ENCODE measurements at regions of chr1 and their contacts with region 1.

Region 1: GRCh38 chr1:78132174-78132947 is 86.6 kb downstream of the GIPC2 start:
- DNase-seq: no peak
- H3K4me3 Mint-ChIP-seq: no peak overlapping the region
- H3K27ac Mint-ChIP-seq: no peak overlapping the region
- H3K4me1 Mint-ChIP-seq: no peaks in the 10 kb centered on the region
- H3K27me3 Mint-ChIP-seq: peaks cover 10% of the 10 kb centered on the region

Region 2: DNA sequence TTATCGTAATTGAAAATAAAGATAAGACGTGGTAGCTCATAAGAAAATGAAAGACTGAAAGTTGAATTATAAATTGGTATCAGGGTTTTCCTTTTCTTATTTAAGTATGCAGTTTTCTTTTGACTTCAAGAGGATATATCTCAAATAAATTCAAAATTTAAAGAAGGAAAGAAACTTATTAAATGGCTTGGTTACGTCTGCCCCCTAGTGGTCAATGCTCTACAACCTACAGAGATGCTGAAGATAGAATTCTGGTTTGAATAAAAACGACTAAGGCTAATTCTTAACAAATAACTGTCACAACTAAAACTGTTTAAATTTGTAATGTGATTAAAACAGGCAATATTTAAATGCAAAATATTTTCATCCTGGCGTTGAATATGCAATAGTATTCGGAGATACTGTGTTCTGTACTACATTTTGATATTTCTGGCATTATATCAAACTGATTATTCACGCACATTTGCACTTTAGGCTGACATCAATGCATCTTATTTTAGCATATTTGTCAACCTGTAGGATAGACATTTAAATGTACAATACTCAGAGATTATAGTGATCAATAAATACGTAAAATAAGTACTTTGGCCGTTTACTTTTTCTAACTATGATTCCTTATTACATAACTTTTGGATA is 544.1 kb after region 1 on chr1:
- intact Hi-C with region 1: loop called (anchors 5 kb)
- DNase-seq: peak; percentile 86
- H3K4me3 Mint-ChIP-seq: no peak overlapping the region
- H3K27ac Mint-ChIP-seq: no peak overlapping the region
- H3K4me1 Mint-ChIP-seq: peaks cover 22% of the 10 kb centered on the region
- H3K27me3 Mint-ChIP-seq: peaks cover 3% of the 10 kb centered on the region

Region 3: GRCh38 chr1:79255410-79255809 is 1123.0 kb after region 1 on chr1:
- intact Hi-C with region 1: no loop called
- DNase-seq: no peak
- H3K4me3 Mint-ChIP-seq: no peak overlapping the region
- H3K27ac Mint-ChIP-seq: no peak overlapping the region
- H3K4me1 Mint-ChIP-seq: no peaks in the 10 kb centered on the region
- H3K27me3 Mint-ChIP-seq: no peaks in the 10 kb centered on the region